K562 (cell line): ENCODE measurements at regions of chr10 and their contacts with region 1.

Region 1: DNA sequence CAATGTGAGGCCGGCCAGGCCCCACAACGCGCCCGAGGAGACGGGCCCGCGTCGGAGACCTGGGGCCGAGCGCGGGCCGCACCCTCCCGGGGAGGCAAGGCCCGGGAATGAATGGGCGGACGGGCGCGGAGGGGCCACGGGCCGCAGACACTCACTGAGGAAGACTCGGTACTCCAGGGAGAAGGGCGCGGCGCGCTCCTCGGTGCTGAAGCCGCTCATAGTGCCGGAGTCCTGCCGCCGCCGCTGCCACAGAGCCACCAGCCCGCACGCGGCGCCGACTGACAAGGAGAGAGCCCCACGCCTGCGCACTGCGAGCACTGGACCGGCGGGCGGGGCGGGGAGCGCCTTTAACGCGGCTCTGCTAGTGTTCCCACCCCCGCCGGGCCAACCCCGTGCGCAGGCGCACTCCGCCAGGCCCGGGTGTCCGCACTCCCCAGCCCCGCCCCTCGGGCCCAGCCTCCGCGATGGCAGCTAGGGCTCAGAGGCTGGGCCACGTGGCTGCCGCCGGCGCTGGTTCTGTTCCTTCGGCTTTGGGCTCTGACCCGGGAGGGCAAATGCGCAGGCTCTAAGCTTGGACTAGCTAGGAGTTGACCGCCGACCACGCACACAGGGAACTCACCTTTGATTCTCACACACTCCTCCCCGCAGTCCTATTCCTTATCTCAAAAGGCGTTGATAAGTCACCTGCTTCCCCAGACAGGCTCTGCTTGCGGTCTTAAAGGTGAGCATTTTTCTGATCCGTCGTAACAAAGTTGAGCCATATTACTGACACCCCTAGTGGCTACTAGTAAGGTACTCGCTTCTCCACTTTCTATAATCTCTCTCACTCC is at the start of gene PPA1:
- DNase-seq: peak; percentile 99 to 100 (median 100)
- ATAC-seq: peak; percentile 92
- H3K4me3 ChIP-seq: peak within 1 kb of the TSS; percentile 83
- H3K27ac ChIP-seq: peak within 1 kb of the TSS; percentile 84
- H3K4me1 ChIP-seq: peaks cover 13 to 23% of the 10 kb centered on the region in 2 experiments; a peak in 4 of 5 replicates
- H3K27me3 ChIP-seq: no peaks in the 10 kb centered on the region
- CTCF ChIP-seq: peak in 2 of 3 experiments; percentile 48 to 50; a peak in 3 of 6 replicates
- EP300 ChIP-seq: no peak; the same call in 1 of the 2 replicates
- POLR2A ChIP-seq: peak; percentile 95
- RAD21 ChIP-seq: 0 out of 4 replicates have a peak, but pooled peaks of 1 of the 2 experiments have one; percentile 6
- polyA plus RNA-seq, gene PPA1: 301 to 366 TPM

Region 2: DNA sequence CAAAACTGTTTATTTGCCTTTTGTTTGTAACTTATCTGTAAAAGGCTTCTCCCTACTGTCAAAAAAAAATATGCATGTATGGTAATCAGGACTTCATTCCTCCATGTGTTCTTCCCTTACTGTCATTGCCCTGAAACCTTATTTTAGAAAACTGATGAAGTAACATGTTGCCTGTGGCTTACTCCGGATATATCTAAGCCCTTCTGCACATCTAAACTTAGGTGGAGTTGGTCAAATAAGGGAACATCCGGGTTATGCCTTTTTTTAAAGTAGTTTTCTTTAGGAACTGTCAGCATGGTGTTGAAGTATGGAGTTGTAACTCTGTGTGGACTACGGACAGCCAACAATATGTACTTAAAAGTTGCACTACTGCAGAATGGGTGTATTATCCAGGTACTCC is 69.2 kb before region 1 on chr10:
- CTCF ChIA-PET with region 1: no interaction called
- POLR2A ChIA-PET with region 1: no interaction called
- in situ Hi-C with region 1: no loop called
- intact Hi-C with region 1: no loop called
- DNase-seq: no peak
- ATAC-seq: no peak
- H3K4me3 ChIP-seq: no peak overlapping the region
- H3K27ac ChIP-seq: no peak overlapping the region
- H3K4me1 ChIP-seq: peaks cover 0 to 23% of the 10 kb centered on the region in 2 experiments; a peak in 4 of 5 replicates
- H3K27me3 ChIP-seq: no peaks in the 10 kb centered on the region
- CTCF ChIP-seq: no peak
- EP300 ChIP-seq: no peak
- POLR2A ChIP-seq: no peak
- RAD21 ChIP-seq: no peak

Region 3: DNA sequence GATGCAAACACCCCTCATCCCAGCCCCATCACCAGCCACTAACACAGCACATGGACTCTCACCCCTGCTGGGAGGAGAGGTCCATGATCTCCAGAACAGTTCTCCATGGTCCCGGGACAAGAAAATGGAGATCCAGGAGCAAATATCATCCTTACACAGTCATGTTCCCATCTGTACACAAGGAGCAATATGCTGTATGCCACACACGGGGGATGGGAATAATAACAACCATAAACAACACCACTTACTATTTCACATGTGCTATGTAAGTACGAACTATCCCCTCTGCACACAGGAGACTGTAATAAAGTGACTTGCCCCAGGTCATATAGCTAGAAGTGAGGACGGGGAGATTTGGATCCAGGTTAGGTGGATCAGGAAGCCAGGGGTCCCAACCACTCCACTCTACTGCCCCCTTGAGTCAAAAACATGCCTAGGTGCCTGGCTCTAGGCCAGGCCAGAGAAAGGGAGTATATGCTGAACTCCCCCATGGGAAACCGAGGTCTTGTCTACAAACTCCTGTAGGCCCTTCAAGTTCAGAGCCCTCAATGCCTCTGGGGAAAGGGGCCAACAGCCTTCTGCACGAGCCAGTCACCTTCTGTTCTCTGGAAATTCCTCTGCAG is 115.0 kb after region 1 on chr10:
- CTCF ChIA-PET with region 1: no interaction called
- POLR2A ChIA-PET with region 1: no interaction called
- in situ Hi-C with region 1: loop called (anchors 5 kb)
- intact Hi-C with region 1: no loop called
- DNase-seq: peak; percentile 81 to 84 (median 82)
- ATAC-seq: peak; percentile 98
- H3K4me3 ChIP-seq: no peak overlapping the region
- H3K27ac ChIP-seq: no peak overlapping the region
- H3K4me1 ChIP-seq: no peaks in the 10 kb centered on the region
- H3K27me3 ChIP-seq: peaks cover 0 to 5% of the 10 kb centered on the region in 2 experiments; a peak in 3 of 5 replicates
- CTCF ChIP-seq: peak; percentile 86 to 90 (median 87)
- EP300 ChIP-seq: no peak; the same call in 1 of the 2 replicates
- POLR2A ChIP-seq: no peak
- RAD21 ChIP-seq: peak; percentile 73 to 92